H1 (cell line): ENCODE measurements at regions of chr20 and their contacts with region 1.

Region 1: DNA sequence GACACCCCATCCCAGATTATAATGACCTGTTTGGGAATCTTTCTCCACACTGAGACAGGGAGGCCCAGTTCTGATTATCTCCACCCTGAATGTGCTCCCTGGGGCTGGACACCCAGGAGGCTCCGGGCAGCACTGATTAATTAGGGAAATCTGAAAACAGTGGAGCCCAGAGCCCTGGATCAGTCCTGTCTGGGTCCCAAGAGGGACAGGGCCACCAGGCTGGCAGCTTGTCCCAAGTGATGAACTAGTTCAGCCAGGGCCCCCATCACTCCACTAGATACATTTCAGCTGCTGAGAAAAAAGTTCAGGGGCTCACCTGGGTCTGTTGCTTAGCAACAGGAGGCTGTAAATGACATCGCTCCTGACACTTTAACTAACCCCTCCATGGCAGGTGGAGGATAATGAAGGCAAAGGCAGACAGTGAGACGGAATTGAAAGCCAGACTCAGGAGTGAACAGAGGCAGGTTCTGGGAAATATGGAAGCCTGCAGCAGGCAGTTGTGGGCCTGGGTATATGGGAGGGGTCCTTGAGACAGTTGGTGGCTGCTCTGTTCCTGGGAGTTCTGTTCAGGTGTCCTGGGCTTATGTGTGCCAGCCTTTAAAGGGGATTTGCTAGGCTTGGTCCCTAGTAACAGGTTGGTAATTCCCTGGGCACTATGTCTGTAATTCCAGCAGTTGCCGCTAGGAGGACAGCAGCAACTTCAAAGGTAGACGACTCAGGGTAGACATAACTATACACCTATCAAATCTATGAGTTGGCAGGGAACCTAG is 78.3 kb upstream of the CTNNBL1 start:
- DNase-seq: peak; percentile 19 to 79
- H3K4me3 ChIP-seq: no peak overlapping the region
- H3K27ac ChIP-seq: no peak overlapping the region
- H3K4me1 ChIP-seq: no peaks in the 10 kb centered on the region
- H3K27me3 ChIP-seq: no peaks in the 10 kb centered on the region
- CTCF ChIP-seq: peak in 2 of 3 experiments; percentile 48 to 80; a peak in 3 of 4 replicates
- EP300 ChIP-seq: no peak
- POLR2A ChIP-seq: no peak
- RAD21 ChIP-seq: peak; percentile 46 to 51

Region 2: GRCh38 chr20:37538003-37538402 is 77.5 kb before region 1 on chr20:
- CTCF ChIA-PET with region 1: no interaction called
- POLR2A ChIA-PET with region 1: no interaction called
- DNase-seq: no peak
- H3K4me3 ChIP-seq: no peak overlapping the region
- H3K27ac ChIP-seq: no peak overlapping the region
- H3K4me1 ChIP-seq: no peaks in the 10 kb centered on the region
- H3K27me3 ChIP-seq: no peaks in the 10 kb centered on the region
- CTCF ChIP-seq: no peak
- EP300 ChIP-seq: no peak
- POLR2A ChIP-seq: no peak
- RAD21 ChIP-seq: no peak

Region 3: GRCh38 chr20:37598100-37598543 is 17.4 kb before region 1 on chr20:
- CTCF ChIA-PET with region 1: interaction called, 43 read pairs
- POLR2A ChIA-PET with region 1: no interaction called
- DNase-seq: peak; percentile 7 to 82
- H3K4me3 ChIP-seq: peak overlapping the region; percentile 22 to 60 (median 29); a peak in 5 of 8 replicates
- H3K27ac ChIP-seq: peak overlapping the region; percentile 62; the same call in 1 of the 2 replicates
- H3K4me1 ChIP-seq: peaks cover 2 to 10% (median 2%) of the 10 kb centered on the region in 4 experiments; a peak in 3 of 7 replicates
- H3K27me3 ChIP-seq: no peaks in the 10 kb centered on the region
- CTCF ChIP-seq: no peak
- EP300 ChIP-seq: peak in 1 of 2 experiments; percentile 79; a peak in 1 of 3 replicates
- POLR2A ChIP-seq: peak in 1 of 2 experiments; percentile 54; a peak in 1 of 3 replicates
- RAD21 ChIP-seq: no peak

Region 4: DNA sequence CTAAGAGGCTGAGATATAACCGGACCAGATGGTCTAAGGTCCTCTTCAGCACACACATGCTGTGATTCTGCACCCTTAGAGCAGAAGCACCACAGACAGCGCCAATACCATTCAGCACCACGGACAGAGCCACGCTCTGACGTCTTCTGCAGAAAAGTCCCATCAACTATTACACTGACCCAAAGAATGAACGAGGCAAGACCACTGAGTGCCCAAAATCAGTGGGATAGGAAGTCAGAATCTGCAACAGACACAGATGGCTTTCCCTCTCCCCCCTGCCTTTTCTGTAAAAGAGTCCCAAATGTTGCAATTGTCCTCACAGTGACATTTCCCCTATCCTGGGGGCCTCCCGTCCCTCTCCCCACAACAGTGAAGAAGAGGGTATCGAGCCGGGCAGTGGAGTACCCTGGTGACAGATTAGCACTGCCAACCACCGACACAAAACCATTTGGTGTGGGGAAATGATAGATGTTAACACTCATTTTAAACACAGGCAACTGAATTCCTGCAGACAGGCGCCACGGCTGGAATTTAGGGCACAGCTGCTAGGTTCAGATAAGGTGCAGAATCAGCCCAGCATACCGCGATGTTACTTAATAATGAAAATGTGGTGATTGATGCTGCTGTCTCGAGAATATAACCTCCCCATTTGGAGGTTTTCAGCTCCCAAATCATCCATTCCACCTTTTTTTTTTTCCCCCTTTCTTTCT is 11.7 kb after region 1 on chr20:
- CTCF ChIA-PET with region 1: interaction called, 27 read pairs
- POLR2A ChIA-PET with region 1: no interaction called
- DNase-seq: peak; percentile 17 to 77
- H3K4me3 ChIP-seq: no peak overlapping the region
- H3K27ac ChIP-seq: no peak overlapping the region
- H3K4me1 ChIP-seq: no peaks in the 10 kb centered on the region
- H3K27me3 ChIP-seq: peaks cover 0 to 6% (median 1%) of the 10 kb centered on the region in 4 experiments; a peak in 4 of 7 replicates
- CTCF ChIP-seq: no peak
- EP300 ChIP-seq: no peak
- POLR2A ChIP-seq: no peak
- RAD21 ChIP-seq: no peak; a peak in 1 of 4 replicates